ENCODE measurements at regions of chr7 and their contacts with region 1.

Region 1: GRCh38 chr7:1842321-1843221 is 172.5 kb downstream of the ELFN1 start:
- DNase-seq: peak; percentile 89
- H3K4me3 ChIP-seq: no peak overlapping the region
- H3K27ac ChIP-seq: peak overlapping the region in 1 of 2 experiments; percentile 84; a peak in 2 of 4 replicates
- H3K4me1 ChIP-seq: peaks cover 0 to 82% of the 10 kb centered on the region in 2 experiments; a peak in 2 of 4 replicates
- H3K27me3 ChIP-seq: no peaks in the 10 kb centered on the region
- CTCF ChIP-seq: no peak
- EP300 ChIP-seq: no peak
- RAD21 ChIP-seq: 0 out of 2 replicates have a peak, but pooled peaks have one; percentile 9

Region 2: DNA sequence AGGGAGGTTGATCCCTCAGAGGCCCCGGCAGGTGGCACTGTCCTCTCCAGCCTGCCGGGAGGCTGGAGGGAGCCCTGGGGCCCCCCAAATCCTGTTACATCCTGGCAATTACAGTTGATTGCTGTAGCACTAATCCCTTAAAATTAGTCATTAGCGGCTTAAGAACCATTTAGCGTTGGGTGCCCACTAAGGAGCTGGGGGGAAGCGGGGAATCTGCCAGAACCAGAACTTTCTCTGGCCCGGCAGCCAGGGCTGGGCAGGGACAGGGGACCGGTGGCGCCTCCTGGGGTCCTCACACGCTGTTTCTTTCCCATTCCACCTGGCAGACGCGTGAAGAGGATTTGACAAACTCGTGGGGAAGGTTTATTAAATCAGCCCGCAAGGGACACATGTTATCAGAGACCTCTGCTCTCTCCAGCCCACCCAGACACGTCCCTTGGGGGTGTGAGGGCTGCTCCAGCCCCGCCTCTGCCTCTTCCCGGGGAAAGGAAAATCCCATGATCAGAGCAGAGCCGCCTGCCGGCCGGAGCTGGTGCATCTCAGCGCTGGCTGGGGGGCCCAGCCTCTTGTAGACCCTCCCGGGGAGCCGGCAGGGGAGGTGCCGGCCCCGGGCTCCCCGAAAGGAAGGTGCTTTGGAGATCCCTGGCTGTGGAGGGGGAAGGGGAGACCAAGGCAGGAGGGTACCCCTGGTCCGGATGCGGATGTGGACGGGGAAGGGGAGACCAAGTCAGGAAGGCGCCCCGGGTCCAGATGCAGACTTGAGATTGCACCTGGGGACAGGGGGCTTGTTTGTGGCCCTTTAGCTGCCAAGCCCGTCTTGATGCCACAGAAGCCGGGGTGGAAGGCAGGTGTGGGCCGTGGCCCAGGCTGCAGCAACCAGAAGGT is 29.8 kb before region 1 on chr7:
- CTCF ChIA-PET with region 1: interaction called, 12 read pairs
- POLR2A ChIA-PET with region 1: no interaction called
- DNase-seq: peak; percentile 95
- H3K4me3 ChIP-seq: no peak overlapping the region
- H3K27ac ChIP-seq: peak overlapping the region in 1 of 2 experiments; percentile 77; a peak in 2 of 4 replicates
- H3K4me1 ChIP-seq: peaks cover 0 to 50% of the 10 kb centered on the region in 2 experiments; a peak in 1 of 4 replicates
- H3K27me3 ChIP-seq: no peaks in the 10 kb centered on the region
- CTCF ChIP-seq: 0 out of 2 replicates have a peak, but pooled peaks have one; percentile 5
- EP300 ChIP-seq: no peak
- RAD21 ChIP-seq: peak; percentile 49

Region 3: GRCh38 chr7:1856161-1856887 is 13.8 kb after region 1 on chr7:
- CTCF ChIA-PET with region 1: interaction called, 11 read pairs
- POLR2A ChIA-PET with region 1: interaction called, 4 read pairs
- DNase-seq: peak; percentile 87
- H3K4me3 ChIP-seq: no peak overlapping the region; a peak in 1 of 4 replicates
- H3K27ac ChIP-seq: peak overlapping the region in 1 of 2 experiments; percentile 96; a peak in 2 of 4 replicates
- H3K4me1 ChIP-seq: peaks cover 0 to 82% of the 10 kb centered on the region in 2 experiments; a peak in 1 of 4 replicates
- H3K27me3 ChIP-seq: no peaks in the 10 kb centered on the region
- CTCF ChIP-seq: no peak
- EP300 ChIP-seq: peak in 1 of 2 experiments; percentile 82; a peak in 2 of 4 replicates
- RAD21 ChIP-seq: peak; percentile 7; the same call in 1 of the 2 replicates

Measured in SK-N-SH (cell line).